Activated CD4-positive, alpha-beta T cell treated with anti-CD3 and anti-CD28 coated beads for 36 hours (primary cell): ENCODE measurements at regions of chr1 and their contacts with region 1.

Region 1: GRCh38 chr1:116817582-116818064 is 63.4 kb downstream of the CD2 start:
- DNase-seq: peak; percentile 88
- ATAC-seq: peak; percentile 65
- H3K4me3 Mint-ChIP-seq: peak overlapping the region; percentile 44
- H3K27ac Mint-ChIP-seq: peak overlapping the region; percentile 91
- H3K4me1 Mint-ChIP-seq: peaks cover 59% of the 10 kb centered on the region
- H3K27me3 Mint-ChIP-seq: no peaks in the 10 kb centered on the region

Region 2: GRCh38 chr1:116724765-116725375 is 92.8 kb before region 1 on chr1:
- CTCF ChIA-PET with region 1: interaction called, 7 read pairs
- POLR2A ChIA-PET with region 1: no interaction called
- intact Hi-C with region 1: loop called in 1 of 2 experiments (anchors 1 kb)
- DNase-seq: peak; percentile 91
- ATAC-seq: peak; percentile 86
- H3K4me3 Mint-ChIP-seq: no peak overlapping the region
- H3K27ac Mint-ChIP-seq: peak overlapping the region; percentile 26
- H3K4me1 Mint-ChIP-seq: peaks cover 32% of the 10 kb centered on the region
- H3K27me3 Mint-ChIP-seq: no peaks in the 10 kb centered on the region

Region 3: DNA sequence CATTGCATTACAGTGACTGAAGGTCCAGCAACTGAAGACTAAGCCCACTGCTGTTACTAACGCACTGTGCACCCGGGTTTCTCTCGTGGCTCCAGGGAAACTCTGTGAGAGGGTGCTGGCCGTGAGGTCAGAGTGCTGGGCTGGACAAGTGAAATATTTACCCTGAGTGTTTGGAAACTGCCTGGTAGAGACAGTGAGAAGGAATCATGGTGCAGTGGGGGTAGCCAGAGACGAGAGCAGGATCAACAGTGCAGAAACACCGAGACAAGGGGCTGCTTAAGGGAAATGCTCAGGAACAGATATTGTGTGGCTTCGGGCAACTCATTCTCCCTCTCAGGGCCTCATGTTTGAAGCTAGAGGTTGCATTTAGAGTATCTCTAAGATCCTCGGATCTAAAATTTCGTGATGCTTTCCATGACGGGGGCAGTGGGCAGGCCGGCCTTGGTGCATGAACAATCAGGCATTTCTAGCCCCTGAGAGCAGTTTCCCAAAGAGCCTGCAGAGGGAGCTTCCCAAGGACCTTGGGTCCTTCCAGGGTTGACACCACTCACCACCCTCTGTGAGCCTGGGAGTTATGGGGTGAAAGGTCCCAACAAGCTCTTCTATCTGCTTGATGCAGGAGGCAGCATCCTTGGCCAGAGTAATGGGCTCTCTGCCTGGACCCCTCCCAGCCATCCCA is 53.7 kb before region 1 on chr1:
- CTCF ChIA-PET with region 1: interaction called, 114 read pairs
- POLR2A ChIA-PET with region 1: interaction called, 54 read pairs
- intact Hi-C with region 1: loop called (anchors 1 kb)
- DNase-seq: peak; percentile 83
- ATAC-seq: peak; percentile 6
- H3K4me3 Mint-ChIP-seq: peak overlapping the region; percentile 93
- H3K27ac Mint-ChIP-seq: peak overlapping the region; percentile 100
- H3K4me1 Mint-ChIP-seq: peaks cover 92% of the 10 kb centered on the region
- H3K27me3 Mint-ChIP-seq: no peaks in the 10 kb centered on the region

Region 4: DNA sequence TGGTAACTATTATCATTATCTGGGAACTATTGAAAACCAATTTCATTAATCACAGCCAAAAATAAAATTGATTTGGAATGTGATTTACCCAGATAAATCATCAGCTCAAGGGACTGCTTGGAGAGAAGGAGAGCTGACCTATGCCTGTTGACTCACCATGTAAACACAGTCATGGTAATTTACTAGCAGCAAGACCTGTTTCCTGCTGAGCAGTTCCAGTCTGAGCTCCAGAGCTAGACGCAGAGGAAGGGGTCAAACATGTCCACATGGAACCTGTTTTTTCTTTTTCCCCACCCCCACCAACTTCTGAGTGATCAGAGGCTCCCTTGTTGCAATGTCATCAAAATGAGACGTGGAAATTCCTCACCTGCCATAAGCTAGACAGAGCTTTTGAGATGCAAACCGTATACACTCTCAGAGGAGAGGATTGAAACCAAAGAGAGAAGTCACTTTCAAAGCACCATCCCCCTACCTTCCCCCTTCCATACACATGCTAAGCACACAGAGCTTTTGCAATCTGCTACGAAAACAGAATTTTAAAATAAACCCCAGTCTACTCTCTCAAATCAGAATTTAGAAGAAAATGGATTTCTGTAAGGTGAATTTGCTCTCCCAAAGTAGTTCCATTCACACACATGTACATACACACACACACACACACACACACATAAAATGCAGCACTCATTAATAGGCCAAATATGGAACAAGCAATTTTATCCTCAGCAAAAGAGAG is 36.2 kb after region 1 on chr1:
- CTCF ChIA-PET with region 1: no interaction called
- POLR2A ChIA-PET with region 1: no interaction called
- intact Hi-C with region 1: loop called in 1 of 2 experiments (anchors 5 kb)
- DNase-seq: peak; percentile 23
- ATAC-seq: peak; percentile 85
- H3K4me3 Mint-ChIP-seq: no peak overlapping the region
- H3K27ac Mint-ChIP-seq: peak overlapping the region; percentile 75
- H3K4me1 Mint-ChIP-seq: peaks cover 31% of the 10 kb centered on the region
- H3K27me3 Mint-ChIP-seq: peaks cover 2% of the 10 kb centered on the region

Region 5: DNA sequence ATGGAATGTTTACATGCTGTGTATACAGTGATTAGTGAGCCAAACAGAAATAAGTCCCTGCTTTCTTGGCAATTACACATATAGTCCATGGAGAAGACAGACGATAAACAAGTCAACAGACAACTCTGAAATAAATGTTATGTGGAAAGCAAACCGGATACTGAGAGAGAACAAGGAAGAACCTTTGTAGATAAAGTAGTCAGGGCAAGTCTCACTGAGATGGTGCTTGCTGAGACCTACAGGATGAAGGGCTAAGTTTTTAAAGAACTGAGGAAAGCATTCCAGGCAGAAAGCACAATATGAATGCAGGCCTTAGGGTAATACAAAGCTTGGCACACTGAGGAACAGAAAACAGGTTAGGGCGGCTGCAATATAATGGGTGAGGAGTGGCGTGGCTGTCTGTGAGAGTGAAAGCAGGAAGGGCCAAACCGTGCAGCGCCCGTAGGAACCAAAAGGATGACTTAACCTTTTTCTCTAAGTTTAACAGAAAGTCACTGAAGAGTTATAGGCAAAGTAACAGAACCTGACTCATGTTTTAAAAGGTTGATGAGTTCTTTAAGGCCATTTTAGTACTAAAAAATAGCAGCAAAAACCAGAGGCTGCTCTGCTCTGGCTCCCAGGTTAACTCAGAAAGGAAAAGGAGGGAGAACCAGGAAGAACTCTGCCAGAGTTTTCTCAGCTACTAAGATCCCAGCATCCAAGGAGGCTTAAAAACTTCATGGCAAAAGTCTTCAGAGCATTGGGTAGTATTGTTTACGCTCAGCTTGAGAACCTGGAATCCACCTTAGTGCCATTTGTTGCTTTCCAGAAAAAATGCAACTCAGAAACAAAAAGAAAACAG is 233.8 kb after region 1 on chr1:
- CTCF ChIA-PET with region 1: interaction called, 4 read pairs
- POLR2A ChIA-PET with region 1: no interaction called
- intact Hi-C with region 1: loop called in 1 of 2 experiments (anchors 2 kb)
- DNase-seq: peak; percentile 57
- ATAC-seq: peak; percentile 57
- H3K4me3 Mint-ChIP-seq: peak overlapping the region; percentile 14
- H3K27ac Mint-ChIP-seq: peak overlapping the region; percentile 65
- H3K4me1 Mint-ChIP-seq: peaks cover 54% of the 10 kb centered on the region
- H3K27me3 Mint-ChIP-seq: no peaks in the 10 kb centered on the region

Region 6: GRCh38 chr1:118304722-118305359 is 1487.2 kb after region 1 on chr1:
- CTCF ChIA-PET with region 1: no interaction called
- POLR2A ChIA-PET with region 1: no interaction called
- intact Hi-C with region 1: no loop called
- DNase-seq: no peak
- ATAC-seq: no peak
- H3K4me3 Mint-ChIP-seq: no peak overlapping the region
- H3K27ac Mint-ChIP-seq: no peak overlapping the region
- H3K4me1 Mint-ChIP-seq: no peaks in the 10 kb centered on the region
- H3K27me3 Mint-ChIP-seq: no peaks in the 10 kb centered on the region